ENCODE measurements at regions of chr3 and their contacts with region 1.

Region 1: GRCh38 chr3:1987980-1988379 is 110.7 kb upstream of the CNTN4 start:
- DNase-seq: peak; percentile 18 to 38
- H3K4me3 ChIP-seq: no peak overlapping the region
- H3K4me3 Mint-ChIP-seq: no peak overlapping the region
- H3K27ac Mint-ChIP-seq: no peak overlapping the region
- H3K4me1 ChIP-seq: no peaks in the 10 kb centered on the region
- H3K4me1 Mint-ChIP-seq: no peaks in the 10 kb centered on the region
- H3K27me3 ChIP-seq: no peaks in the 10 kb centered on the region
- H3K27me3 Mint-ChIP-seq: peaks cover 3% of the 10 kb centered on the region
- CTCF ChIP-seq: peak; percentile 29 to 55

Region 2: DNA sequence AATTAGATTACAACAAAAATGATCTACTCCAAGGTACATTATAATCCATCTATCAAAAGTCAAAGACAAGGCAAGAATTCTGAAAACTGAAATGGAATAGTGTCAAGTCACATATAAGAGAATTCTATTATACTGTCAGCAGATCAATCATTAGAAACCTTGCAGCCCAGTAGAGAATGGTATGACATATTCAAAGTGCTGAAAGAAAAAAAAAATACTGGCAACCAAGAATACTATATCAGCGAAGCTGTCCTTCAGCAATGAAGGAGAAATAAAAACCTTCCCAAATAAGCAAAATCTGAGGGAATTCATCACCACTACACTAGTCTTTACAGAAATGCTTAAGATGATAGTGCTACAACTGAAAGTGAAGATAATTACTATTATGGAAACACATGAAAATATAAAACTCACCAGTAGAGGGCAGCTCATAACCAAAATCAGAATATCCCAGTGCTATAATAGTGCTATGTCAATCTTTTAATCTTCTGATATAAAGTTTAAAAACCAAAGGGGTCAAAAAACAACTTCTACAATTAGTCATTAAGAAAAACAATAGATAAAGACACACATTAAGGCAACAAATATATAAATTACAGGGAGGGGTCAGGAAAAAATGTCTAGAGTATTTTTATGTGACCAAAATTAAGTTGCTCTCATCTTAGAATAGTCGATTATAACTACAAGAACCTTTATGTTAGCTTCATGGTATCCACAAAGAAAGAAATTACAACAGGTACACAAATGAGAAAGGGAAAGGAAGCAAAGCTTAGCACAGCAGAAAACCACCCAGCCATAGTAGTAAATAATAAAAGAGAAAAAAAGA is 1085.8 kb before region 1 on chr3:
- CTCF ChIA-PET with region 1: no interaction called
- POLR2A ChIA-PET with region 1: no interaction called
- intact Hi-C with region 1: loop called (anchors 10 kb)
- DNase-seq: peak in 1 of 2 experiments; percentile 4
- H3K4me3 ChIP-seq: no peak overlapping the region
- H3K4me3 Mint-ChIP-seq: no peak overlapping the region
- H3K27ac Mint-ChIP-seq: no peak overlapping the region
- H3K4me1 ChIP-seq: no peaks in the 10 kb centered on the region
- H3K4me1 Mint-ChIP-seq: no peaks in the 10 kb centered on the region
- H3K27me3 ChIP-seq: no peaks in the 10 kb centered on the region
- H3K27me3 Mint-ChIP-seq: no peaks in the 10 kb centered on the region
- CTCF ChIP-seq: peak; percentile 10 to 52

Region 3: DNA sequence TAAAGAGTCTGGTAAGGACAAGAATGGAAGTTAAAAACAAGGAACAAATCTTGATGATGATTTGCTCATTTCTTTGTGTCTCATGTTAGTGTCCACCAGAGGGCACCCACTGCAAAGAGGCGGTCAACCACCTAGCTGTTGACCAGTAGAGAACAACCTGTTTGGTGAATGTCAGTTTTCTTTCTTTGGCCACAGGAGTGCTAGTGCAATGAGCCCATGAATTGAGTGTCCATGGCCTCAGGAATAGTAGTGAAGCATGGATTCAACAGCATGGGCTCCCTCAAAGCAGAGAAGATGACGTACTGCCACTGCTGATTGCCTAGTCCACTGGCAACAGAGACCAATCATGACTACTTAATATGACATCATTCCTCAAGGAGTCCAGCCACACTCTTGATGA is 905.9 kb before region 1 on chr3:
- CTCF ChIA-PET with region 1: no interaction called
- POLR2A ChIA-PET with region 1: no interaction called
- intact Hi-C with region 1: loop called (anchors 1 kb)
- DNase-seq: peak; percentile 44 to 60
- H3K4me3 ChIP-seq: no peak overlapping the region
- H3K4me3 Mint-ChIP-seq: no peak overlapping the region
- H3K27ac Mint-ChIP-seq: no peak overlapping the region
- H3K4me1 ChIP-seq: no peaks in the 10 kb centered on the region
- H3K4me1 Mint-ChIP-seq: no peaks in the 10 kb centered on the region
- H3K27me3 ChIP-seq: no peaks in the 10 kb centered on the region
- H3K27me3 Mint-ChIP-seq: no peaks in the 10 kb centered on the region
- CTCF ChIP-seq: peak; percentile 61 to 73

Region 4: DNA sequence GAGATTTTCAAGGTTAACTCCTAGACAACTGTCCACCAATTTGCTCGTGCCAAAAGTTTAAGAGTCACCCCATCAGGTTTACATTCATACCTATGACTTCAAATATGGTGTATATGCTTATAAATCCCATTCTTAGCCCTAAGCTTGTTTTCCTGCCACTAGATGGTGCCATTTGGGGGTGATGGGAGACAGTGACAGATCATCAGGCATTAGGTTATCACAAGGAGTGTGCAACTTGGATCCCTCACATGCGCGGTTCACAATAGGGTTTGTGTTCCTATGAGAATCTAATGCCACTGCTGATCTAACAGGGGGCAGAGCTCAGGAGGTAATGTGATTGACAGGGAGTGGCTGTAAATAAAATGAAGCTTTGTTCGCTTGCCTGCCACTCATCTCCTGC is 712.5 kb before region 1 on chr3:
- CTCF ChIA-PET with region 1: no interaction called
- POLR2A ChIA-PET with region 1: no interaction called
- intact Hi-C with region 1: loop called (anchors 5 kb)
- DNase-seq: peak; percentile 30 to 38
- H3K4me3 ChIP-seq: no peak overlapping the region
- H3K4me3 Mint-ChIP-seq: no peak overlapping the region
- H3K27ac Mint-ChIP-seq: no peak overlapping the region
- H3K4me1 ChIP-seq: no peaks in the 10 kb centered on the region
- H3K4me1 Mint-ChIP-seq: no peaks in the 10 kb centered on the region
- H3K27me3 ChIP-seq: no peaks in the 10 kb centered on the region
- H3K27me3 Mint-ChIP-seq: peaks cover 6% of the 10 kb centered on the region
- CTCF ChIP-seq: peak; percentile 32 to 47

Region 5: DNA sequence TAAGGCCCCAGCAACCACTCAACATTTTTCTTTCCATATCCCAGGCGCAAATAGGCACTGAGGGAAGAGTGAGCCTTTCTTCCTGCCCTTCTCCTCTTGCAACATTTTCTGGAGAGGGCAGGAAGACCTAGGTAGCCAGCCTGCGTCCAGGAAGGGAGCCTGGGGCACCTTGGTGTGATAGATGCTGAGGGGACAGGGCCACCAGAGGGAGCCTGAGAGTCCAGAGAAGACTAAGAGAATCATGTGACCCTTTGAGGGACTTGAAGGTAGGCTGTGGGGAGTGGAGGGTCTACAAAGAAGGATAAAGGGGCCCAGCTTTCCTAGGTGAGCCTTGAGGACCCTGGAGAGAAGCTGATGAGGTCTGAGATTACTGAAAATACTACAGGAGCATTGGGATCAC is 548.6 kb before region 1 on chr3:
- CTCF ChIA-PET with region 1: no interaction called
- POLR2A ChIA-PET with region 1: no interaction called
- intact Hi-C with region 1: loop called (anchors 5 kb)
- DNase-seq: peak; percentile 43 to 52
- H3K4me3 ChIP-seq: no peak overlapping the region
- H3K4me3 Mint-ChIP-seq: no peak overlapping the region
- H3K27ac Mint-ChIP-seq: no peak overlapping the region
- H3K4me1 ChIP-seq: no peaks in the 10 kb centered on the region
- H3K4me1 Mint-ChIP-seq: no peaks in the 10 kb centered on the region
- H3K27me3 ChIP-seq: no peaks in the 10 kb centered on the region
- H3K27me3 Mint-ChIP-seq: peaks cover 3% of the 10 kb centered on the region
- CTCF ChIP-seq: peak; percentile 31 to 59

Region 6: GRCh38 chr3:1787094-1787493 is 200.9 kb before region 1 on chr3:
- CTCF ChIA-PET with region 1: no interaction called
- POLR2A ChIA-PET with region 1: no interaction called
- intact Hi-C with region 1: loop called (anchors 10 kb)
- DNase-seq: no peak
- H3K4me3 ChIP-seq: no peak overlapping the region
- H3K4me3 Mint-ChIP-seq: no peak overlapping the region
- H3K27ac Mint-ChIP-seq: no peak overlapping the region
- H3K4me1 ChIP-seq: no peaks in the 10 kb centered on the region
- H3K4me1 Mint-ChIP-seq: no peaks in the 10 kb centered on the region
- H3K27me3 ChIP-seq: no peaks in the 10 kb centered on the region
- H3K27me3 Mint-ChIP-seq: peaks cover 3% of the 10 kb centered on the region
- CTCF ChIP-seq: no peak

Region 7: DNA sequence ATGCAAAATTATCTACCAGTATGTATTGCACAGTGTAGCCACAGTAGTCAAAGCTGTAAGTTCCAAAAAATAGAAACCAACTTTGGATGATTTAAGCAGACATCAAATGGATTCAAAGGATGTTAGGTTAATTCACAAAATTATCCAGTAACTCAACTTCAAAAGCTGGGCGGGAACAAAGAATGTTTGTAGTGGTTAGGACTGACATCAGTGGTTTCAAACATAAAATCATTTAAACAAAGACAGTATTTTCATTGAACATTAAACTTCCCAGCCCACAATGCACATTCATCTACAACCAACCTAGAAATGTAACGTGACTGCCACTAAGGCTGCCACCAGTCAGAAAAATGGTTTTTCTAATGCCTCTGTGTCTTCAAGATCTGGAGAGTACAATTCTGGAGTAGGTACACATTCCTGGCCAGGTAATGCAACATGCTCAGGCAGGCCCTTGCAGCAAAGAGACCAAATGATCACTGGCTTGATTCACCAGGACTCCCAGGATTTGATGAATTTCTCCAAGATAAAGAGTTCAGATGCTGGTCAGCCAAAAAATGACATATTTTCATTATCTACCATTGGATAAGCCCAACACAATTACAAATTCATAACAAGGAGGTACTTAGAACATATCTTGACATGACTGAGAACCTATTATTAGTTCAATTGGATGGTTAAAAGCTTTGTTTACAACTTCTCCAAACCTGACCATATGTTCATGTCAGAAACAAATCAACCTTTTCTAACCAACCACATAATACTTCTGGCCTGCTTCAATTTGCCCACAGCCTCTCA is 79.1 kb before region 1 on chr3:
- CTCF ChIA-PET with region 1: no interaction called
- POLR2A ChIA-PET with region 1: no interaction called
- intact Hi-C with region 1: no loop called
- DNase-seq: no peak
- H3K4me3 ChIP-seq: no peak overlapping the region
- H3K4me3 Mint-ChIP-seq: no peak overlapping the region
- H3K27ac Mint-ChIP-seq: no peak overlapping the region
- H3K4me1 ChIP-seq: no peaks in the 10 kb centered on the region
- H3K4me1 Mint-ChIP-seq: no peaks in the 10 kb centered on the region
- H3K27me3 ChIP-seq: no peaks in the 10 kb centered on the region
- H3K27me3 Mint-ChIP-seq: peaks cover 9% of the 10 kb centered on the region
- CTCF ChIP-seq: no peak

Region 8: GRCh38 chr3:2156244-2156847 is 168.4 kb after region 1 on chr3:
- CTCF ChIA-PET with region 1: no interaction called
- POLR2A ChIA-PET with region 1: no interaction called
- intact Hi-C with region 1: loop called (anchors 1 kb)
- DNase-seq: peak; percentile 39 to 52
- H3K4me3 ChIP-seq: no peak overlapping the region
- H3K4me3 Mint-ChIP-seq: peak overlapping the region; percentile 46
- H3K27ac Mint-ChIP-seq: peak overlapping the region; percentile 14
- H3K4me1 ChIP-seq: no peaks in the 10 kb centered on the region
- H3K4me1 Mint-ChIP-seq: no peaks in the 10 kb centered on the region
- H3K27me3 ChIP-seq: no peaks in the 10 kb centered on the region
- H3K27me3 Mint-ChIP-seq: no peaks in the 10 kb centered on the region
- CTCF ChIP-seq: peak; percentile 59